Activated CD4-positive, alpha-beta T cell treated with anti-CD3 and anti-CD28 coated beads for 36 hours (primary cell): ENCODE measurements at regions of chr17 and their contacts with region 1.

Region 1: GRCh38 chr17:28726226-28727130 is at the start of gene TLCD1:
- DNase-seq: peak; percentile 97
- ATAC-seq: peak; percentile 35
- H3K4me3 Mint-ChIP-seq: peak within 1 kb of the TSS; percentile 99
- H3K27ac Mint-ChIP-seq: peak within 1 kb of the TSS; percentile 99
- H3K4me1 Mint-ChIP-seq: peaks cover 52% of the 10 kb centered on the region
- H3K27me3 Mint-ChIP-seq: no peaks in the 10 kb centered on the region
- total RNA-seq, gene TLCD1: 8.5 to 8.7 TPM

Region 2: GRCh38 chr17:28644985-28645939 is 81.2 kb before region 1 on chr17 and contains the start of gene BLTP2:
- CTCF ChIA-PET with region 1: interaction called, 12 read pairs
- POLR2A ChIA-PET with region 1: interaction called, 7 read pairs
- intact Hi-C with region 1: loop called in 1 of 2 experiments (anchors 2 kb)
- DNase-seq: peak; percentile 98
- ATAC-seq: peak; percentile 98
- H3K4me3 Mint-ChIP-seq: peak within 1 kb of the TSS; percentile 95
- H3K27ac Mint-ChIP-seq: peak within 1 kb of the TSS; percentile 87
- H3K4me1 Mint-ChIP-seq: peaks cover 38% of the 10 kb centered on the region
- H3K27me3 Mint-ChIP-seq: no peaks in the 10 kb centered on the region
- total RNA-seq, gene BLTP2: 138 to 152 TPM

Region 3: DNA sequence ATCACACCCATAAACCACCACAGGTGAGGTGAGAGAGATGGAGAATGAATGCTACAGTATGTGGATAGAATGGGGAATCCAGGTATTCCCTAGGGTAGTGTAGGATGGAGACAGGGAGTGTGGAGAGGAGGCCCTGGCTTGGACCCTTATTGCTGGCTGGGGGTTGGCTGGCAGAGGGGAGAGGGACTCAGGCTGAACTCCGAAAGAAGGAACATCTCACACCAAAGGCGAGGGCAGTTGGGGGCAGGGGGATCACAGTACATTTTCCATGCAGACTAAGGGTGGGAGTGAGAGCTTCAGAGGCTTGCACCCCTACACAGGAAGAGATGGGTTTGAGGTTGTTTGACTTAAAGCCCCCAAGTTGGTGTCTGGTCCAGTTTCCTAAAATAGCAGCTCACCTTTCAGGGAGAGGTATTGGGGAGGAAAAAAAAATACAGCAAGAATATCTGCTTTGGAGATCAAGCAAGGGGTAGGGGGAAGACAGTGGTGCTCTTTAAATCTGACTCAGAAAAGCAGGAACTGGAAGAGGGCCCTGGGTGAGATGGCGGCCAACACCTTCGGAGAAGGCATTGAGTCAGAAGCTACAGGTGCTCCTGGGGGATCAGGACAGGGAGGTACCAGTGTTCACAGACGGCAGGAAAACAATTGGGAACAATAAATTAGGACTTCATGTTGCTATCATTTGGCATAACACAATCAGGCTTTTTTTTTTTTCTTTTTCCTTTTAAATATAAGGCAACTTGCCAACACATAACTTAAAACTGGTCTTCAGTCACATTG is 29.7 kb after region 1 on chr17:
- CTCF ChIA-PET with region 1: interaction called, 294 read pairs
- POLR2A ChIA-PET with region 1: interaction called, 111 read pairs
- intact Hi-C with region 1: loop called in 1 of 2 experiments (anchors 5 kb)
- DNase-seq: no peak
- ATAC-seq: no peak
- H3K4me3 Mint-ChIP-seq: no peak overlapping the region
- H3K27ac Mint-ChIP-seq: peak overlapping the region; percentile 33
- H3K4me1 Mint-ChIP-seq: no peaks in the 10 kb centered on the region
- H3K27me3 Mint-ChIP-seq: no peaks in the 10 kb centered on the region

Region 4: GRCh38 chr17:28849281-28849680 is 122.8 kb after region 1 on chr17:
- CTCF ChIA-PET with region 1: interaction called, 8 read pairs
- POLR2A ChIA-PET with region 1: no interaction called
- intact Hi-C with region 1: loop called (anchors 1 to 5 kb)
- DNase-seq: peak; percentile 46
- ATAC-seq: peak; percentile 75
- H3K4me3 Mint-ChIP-seq: no peak overlapping the region
- H3K27ac Mint-ChIP-seq: no peak overlapping the region
- H3K4me1 Mint-ChIP-seq: peaks cover 5% of the 10 kb centered on the region
- H3K27me3 Mint-ChIP-seq: no peaks in the 10 kb centered on the region

Region 5: DNA sequence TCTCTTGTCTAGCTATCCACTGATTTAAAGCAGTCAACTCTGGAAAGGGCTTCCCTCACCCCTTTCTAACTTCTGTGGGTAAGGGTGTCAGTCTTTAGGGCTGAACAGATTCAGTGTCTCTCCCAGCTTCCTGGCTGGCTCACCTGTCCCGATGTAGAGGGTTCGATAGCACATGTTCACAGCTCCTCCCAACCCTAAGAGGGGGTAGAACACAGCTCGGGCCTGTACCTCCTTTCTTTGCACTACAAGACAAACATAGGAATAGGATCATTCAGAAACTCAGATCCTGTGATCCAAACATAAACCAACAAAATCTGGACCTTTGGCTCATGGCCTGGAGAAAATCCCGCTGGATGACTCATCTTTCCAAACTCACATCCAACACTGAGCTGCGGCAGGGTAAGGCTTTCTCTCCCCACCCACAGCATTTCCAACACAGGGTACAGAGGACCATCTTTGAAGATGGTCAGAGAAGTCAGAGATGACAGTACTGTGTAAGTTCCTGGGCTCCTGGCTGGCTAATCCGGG is 182.2 kb after region 1 on chr17:
- CTCF ChIA-PET with region 1: interaction called, 18 read pairs
- POLR2A ChIA-PET with region 1: interaction called, 3 read pairs
- intact Hi-C with region 1: loop called (anchors 1 kb)
- DNase-seq: no peak
- ATAC-seq: no peak
- H3K4me3 Mint-ChIP-seq: no peak overlapping the region
- H3K27ac Mint-ChIP-seq: peak overlapping the region; percentile 6
- H3K4me1 Mint-ChIP-seq: no peaks in the 10 kb centered on the region
- H3K27me3 Mint-ChIP-seq: no peaks in the 10 kb centered on the region

Region 6: GRCh38 chr17:29116804-29117772 is 390.6 kb after region 1 on chr17:
- CTCF ChIA-PET with region 1: interaction called, 13 read pairs
- POLR2A ChIA-PET with region 1: interaction called, 4 read pairs
- intact Hi-C with region 1: loop called (anchors 2 to 10 kb)
- DNase-seq: peak; percentile 90
- ATAC-seq: peak; percentile 88
- H3K4me3 Mint-ChIP-seq: no peak overlapping the region
- H3K27ac Mint-ChIP-seq: no peak overlapping the region
- H3K4me1 Mint-ChIP-seq: peaks cover 5% of the 10 kb centered on the region
- H3K27me3 Mint-ChIP-seq: no peaks in the 10 kb centered on the region

Region 7: DNA sequence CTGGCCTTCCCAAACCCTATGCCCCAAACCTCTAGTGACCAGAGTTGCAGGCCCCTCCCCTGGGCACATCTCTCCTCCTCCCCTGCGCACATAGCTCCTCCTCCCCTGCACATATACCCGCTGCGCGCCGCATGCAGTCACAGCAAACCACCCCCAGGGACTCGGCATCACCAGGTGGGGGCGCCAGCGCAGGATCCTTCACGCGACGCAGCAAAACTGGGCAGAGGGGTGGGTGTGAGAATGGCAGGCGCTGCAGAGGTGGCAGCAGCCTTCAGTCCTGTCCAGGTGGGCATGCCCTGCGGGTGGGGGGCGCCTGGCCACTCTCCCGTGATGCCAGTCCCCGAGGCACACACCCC is 890.6 kb after region 1 on chr17:
- CTCF ChIA-PET with region 1: no interaction called
- POLR2A ChIA-PET with region 1: no interaction called
- intact Hi-C with region 1: loop called in 1 of 2 experiments (anchors 10 kb)
- DNase-seq: peak; percentile 98
- ATAC-seq: peak; percentile 82
- H3K4me3 Mint-ChIP-seq: peak overlapping the region; percentile 75
- H3K27ac Mint-ChIP-seq: peak overlapping the region; percentile 89
- H3K4me1 Mint-ChIP-seq: peaks cover 47% of the 10 kb centered on the region
- H3K27me3 Mint-ChIP-seq: peaks cover 2% of the 10 kb centered on the region